ENCODE measurements at regions of chr1 and their contacts with region 1.

Region 1: DNA sequence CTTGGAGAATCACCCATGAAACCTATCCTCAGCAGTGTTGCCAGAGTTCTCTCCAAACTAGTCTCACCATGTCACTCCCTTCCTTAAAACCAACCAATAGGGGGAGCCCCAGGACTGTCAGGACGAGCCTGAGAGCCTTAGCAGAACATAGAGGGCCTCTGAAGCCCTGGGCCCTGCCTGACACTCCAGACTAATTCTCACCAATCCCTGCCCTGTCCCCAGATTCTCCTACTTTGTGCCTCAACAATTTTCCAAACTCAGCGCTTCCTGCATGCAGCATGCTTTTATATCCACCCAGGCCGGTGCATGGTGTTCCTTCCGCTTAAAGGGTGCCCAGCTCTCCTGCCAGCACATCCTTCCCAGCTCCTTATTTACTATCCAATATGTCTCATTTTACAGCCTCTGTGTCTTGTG is 42.7 kb downstream of the HSD3B1 start:
- DNase-seq: peak in 1 of 2 donors; percentile 55
- ATAC-seq: peak; percentile 63 to 85 (median 80)
- H3K4me3 ChIP-seq: no peak overlapping the region
- H3K27ac ChIP-seq: no peak overlapping the region
- H3K4me1 ChIP-seq: peaks cover 0 to 16% (median 0%) of the 10 kb centered on the region in 9 donors
- H3K27me3 ChIP-seq: no peaks in the 10 kb centered on the region
- CTCF ChIP-seq: peak in 8 of 9 donors; percentile 33 to 67 (median 59)

Region 2: GRCh38 chr1:119387858-119388257 is 161.9 kb before region 1 on chr1:
- intact Hi-C with region 1: no loop called
- DNase-seq: no peak
- ATAC-seq: no peak
- H3K4me3 ChIP-seq: no peak overlapping the region
- H3K27ac ChIP-seq: no peak overlapping the region
- H3K4me1 ChIP-seq: no peaks in the 10 kb centered on the region
- H3K27me3 ChIP-seq: peaks cover 0 to 5% (median 0%) of the 10 kb centered on the region in 7 donors
- CTCF ChIP-seq: no peak

Region 3: DNA sequence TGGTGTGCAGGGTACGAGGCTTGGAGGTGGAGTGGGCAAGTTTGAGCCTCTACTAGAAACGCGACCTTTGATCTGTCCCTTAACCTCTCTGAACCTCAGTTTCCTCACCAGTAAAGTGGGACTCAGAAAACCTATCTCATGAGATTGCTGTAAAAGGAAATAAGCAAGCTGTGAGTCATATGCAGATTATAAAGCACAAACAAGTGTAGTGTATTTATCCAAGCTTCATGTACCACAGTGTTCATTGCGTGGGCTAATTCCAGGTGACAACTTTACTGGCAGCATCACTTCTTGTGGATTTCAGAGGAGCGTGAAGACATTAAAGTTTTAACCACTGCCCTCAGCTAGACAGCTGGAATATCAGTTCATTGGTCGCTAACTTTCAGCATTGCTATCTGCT is 54.0 kb after region 1 on chr1:
- intact Hi-C with region 1: loop called in 1 of 10 experiments (anchors 5 kb)
- DNase-seq: no peak
- ATAC-seq: no peak
- H3K4me3 ChIP-seq: no peak overlapping the region
- H3K27ac ChIP-seq: no peak overlapping the region
- H3K4me1 ChIP-seq: peaks cover 0 to 26% (median 0%) of the 10 kb centered on the region in 9 donors
- H3K27me3 ChIP-seq: no peaks in the 10 kb centered on the region
- CTCF ChIP-seq: no peak

Region 4: GRCh38 chr1:119808972-119809550 is 259.3 kb after region 1 on chr1:
- intact Hi-C with region 1: loop called in 1 of 10 experiments (anchors 10 kb)
- DNase-seq: peak; percentile 45 to 70
- ATAC-seq: peak in 6 of 8 donors; percentile 66 to 82 (median 73)
- H3K4me3 ChIP-seq: no peak overlapping the region
- H3K27ac ChIP-seq: no peak overlapping the region
- H3K4me1 ChIP-seq: no peaks in the 10 kb centered on the region
- H3K27me3 ChIP-seq: peaks cover 0 to 25% (median 18%) of the 10 kb centered on the region in 7 donors
- CTCF ChIP-seq: peak; percentile 63 to 94 (median 86)

Measured in heart right ventricle (tissue), 16 donors.